ENCODE measurements at regions of chr20 and their contacts with region 1.

Region 1: DNA sequence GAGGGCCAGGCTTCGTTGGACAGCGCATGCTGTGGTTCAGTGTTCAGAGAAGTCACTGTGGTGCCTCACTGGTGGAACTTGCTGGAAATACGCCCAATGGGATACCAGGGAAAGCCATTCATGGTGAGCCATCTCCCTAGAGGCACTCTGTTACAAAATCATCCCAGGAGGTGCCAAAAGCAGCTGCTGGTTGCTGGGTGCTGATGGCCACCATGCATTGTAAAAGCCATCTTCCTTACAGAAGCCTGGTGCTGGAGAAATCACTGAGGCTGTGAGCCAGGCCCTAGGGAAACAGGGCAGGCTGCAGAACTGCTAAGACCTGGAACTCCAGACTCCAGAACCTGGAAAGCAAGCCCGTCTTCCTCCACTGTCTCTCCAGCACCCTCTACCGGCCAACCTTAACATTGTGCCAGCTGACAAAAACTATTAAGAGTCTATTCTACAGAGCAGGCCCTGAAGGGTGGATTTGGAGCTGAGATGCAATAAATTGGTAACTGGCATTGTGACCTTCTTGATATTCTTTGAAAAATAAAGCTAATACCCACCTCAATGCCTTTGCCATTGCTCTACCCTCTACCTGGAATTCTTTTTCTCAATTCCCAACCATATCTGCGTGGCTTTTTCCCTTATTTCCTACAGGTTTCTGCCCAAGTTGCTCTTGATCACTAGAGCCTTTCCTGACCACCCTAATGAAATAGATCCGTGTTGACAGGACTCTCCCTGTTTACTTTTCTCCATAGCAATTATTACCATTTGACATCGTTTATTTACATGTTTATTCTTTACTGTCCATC is 18.5 kb downstream of the SNRPB start:
- DNase-seq: peak; percentile 12 to 68 (median 39)
- ATAC-seq: peak; percentile 78
- H3K4me3 ChIP-seq: no peak overlapping the region
- H3K4me3 Mint-ChIP-seq: no peak overlapping the region
- H3K27ac ChIP-seq: no peak overlapping the region
- H3K27ac Mint-ChIP-seq: no peak overlapping the region
- H3K4me1 ChIP-seq: peaks cover 0 to 6% of the 10 kb centered on the region in 2 donors
- H3K4me1 Mint-ChIP-seq: peaks cover 0 to 13% (median 4%) of the 10 kb centered on the region in 7 donors
- H3K27me3 ChIP-seq: no peaks in the 10 kb centered on the region
- H3K27me3 Mint-ChIP-seq: peaks cover 0 to 4% (median 0%) of the 10 kb centered on the region in 5 donors

Region 2: GRCh38 chr20:1764136-1765033 is 687.8 kb before region 1 on chr20:
- CTCF ChIA-PET with region 1: no interaction called
- POLR2A ChIA-PET with region 1: no interaction called
- intact Hi-C with region 1: loop called in 1 of 2 experiments (anchors 2 kb)
- DNase-seq: peak in 8 of 9 donors; percentile 20 to 55 (median 44)
- ATAC-seq: peak; percentile 82
- H3K4me3 ChIP-seq: no peak overlapping the region
- H3K4me3 Mint-ChIP-seq: no peak overlapping the region
- H3K27ac ChIP-seq: no peak overlapping the region
- H3K27ac Mint-ChIP-seq: no peak overlapping the region
- H3K4me1 ChIP-seq: no peaks in the 10 kb centered on the region
- H3K4me1 Mint-ChIP-seq: peaks cover 0 to 5% (median 0%) of the 10 kb centered on the region in 7 donors
- H3K27me3 ChIP-seq: no peaks in the 10 kb centered on the region
- H3K27me3 Mint-ChIP-seq: peaks cover 0 to 27% (median 4%) of the 10 kb centered on the region in 5 donors

Region 3: DNA sequence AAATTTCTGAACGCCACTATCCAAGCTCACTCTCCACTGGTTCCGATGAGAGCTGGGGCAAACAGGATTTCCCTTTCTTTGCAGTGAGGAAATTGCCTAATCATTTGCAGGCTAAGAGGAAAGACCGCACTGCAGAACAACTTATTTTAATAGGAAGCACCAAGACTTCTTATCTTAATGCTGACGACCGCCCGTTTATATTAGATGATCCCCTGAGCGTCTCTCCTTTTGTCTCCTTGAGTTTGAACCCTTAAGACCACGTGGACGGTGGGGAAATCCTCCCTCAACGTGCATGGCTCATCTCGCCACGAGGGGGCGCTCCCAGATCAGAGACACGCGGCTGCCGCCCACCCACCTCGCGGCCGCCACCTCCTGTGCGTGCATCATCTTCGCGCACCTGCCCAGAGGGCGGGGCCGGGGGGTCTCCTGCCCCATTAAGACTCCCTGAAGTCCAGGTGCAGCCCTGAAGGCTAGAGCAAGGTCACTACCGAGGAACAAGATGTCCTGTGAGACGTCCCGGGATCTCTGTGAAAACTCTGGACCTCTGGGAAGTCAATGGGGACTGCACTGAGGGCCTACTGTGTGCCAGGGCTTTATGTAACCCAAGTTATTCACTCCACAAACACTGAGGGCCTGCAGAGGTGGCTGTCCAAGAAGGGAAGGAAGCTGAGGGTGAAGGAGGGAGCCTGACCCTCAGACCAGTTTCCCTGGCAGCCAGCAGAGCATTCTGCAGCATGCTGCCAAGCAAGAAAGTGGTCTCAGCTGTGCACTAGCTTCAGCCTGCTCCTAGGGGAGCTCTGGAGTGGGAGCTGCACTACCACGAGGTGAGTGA is 486.4 kb before region 1 on chr20:
- CTCF ChIA-PET with region 1: no interaction called
- POLR2A ChIA-PET with region 1: no interaction called
- intact Hi-C with region 1: loop called (anchors 5 kb)
- DNase-seq: peak; percentile 34 to 85 (median 62)
- ATAC-seq: peak; percentile 80
- H3K4me3 ChIP-seq: no peak overlapping the region
- H3K4me3 Mint-ChIP-seq: peak overlapping the region in 9 of 10 donors; percentile 33 to 72 (median 62)
- H3K27ac ChIP-seq: no peak overlapping the region
- H3K27ac Mint-ChIP-seq: no peak overlapping the region
- H3K4me1 ChIP-seq: no peaks in the 10 kb centered on the region
- H3K4me1 Mint-ChIP-seq: peaks cover 4 to 9% (median 7%) of the 10 kb centered on the region in 7 donors
- H3K27me3 ChIP-seq: no peaks in the 10 kb centered on the region
- H3K27me3 Mint-ChIP-seq: peaks cover 14 to 41% (median 28%) of the 10 kb centered on the region in 5 donors

Region 4: DNA sequence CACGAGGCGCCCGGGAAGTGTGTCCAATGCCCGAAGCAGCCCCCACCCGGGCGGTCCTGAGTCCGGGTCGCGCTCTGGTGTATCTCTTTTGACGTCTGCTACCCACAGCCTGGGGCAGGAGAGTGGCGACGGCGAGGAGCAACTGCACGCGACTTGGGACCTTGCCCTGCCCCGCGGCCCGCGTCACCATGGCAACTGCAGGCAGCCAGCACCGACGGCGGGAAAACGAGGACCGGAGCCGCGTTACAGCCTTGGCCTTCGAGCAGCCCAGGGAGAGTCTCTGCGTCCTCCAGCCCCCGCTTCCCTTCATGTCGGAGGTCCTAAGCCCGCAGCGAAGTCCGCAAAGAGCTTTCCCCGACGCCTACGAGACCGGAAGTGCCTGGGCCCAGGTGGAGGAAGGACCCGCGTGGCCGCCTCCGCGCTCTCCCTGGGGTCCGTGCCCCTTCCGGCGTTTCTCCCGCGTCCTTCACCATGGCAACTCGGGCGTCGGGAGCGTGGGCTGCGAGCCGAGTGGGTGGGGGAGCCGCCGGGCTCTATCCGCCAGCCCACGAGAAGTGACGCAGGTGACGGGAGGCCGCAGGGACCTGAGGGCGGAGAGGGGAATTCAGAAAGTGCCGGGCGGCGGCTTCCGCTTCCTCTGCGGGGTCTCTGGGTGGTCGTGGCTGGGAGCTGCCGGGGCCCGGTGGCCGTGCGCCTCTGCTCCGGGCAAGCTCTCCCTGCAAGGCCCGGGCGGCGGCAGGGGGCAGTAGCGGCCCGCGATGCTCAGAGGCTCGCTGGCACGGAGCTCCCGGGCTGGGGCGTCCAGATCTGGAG is 245.0 kb before region 1 on chr20:
- CTCF ChIA-PET with region 1: no interaction called
- POLR2A ChIA-PET with region 1: no interaction called
- intact Hi-C with region 1: loop called in 1 of 2 experiments (anchors 1 kb)
- DNase-seq: peak in 8 of 9 donors; percentile 17 to 84 (median 30)
- ATAC-seq: peak; percentile 75
- H3K4me3 ChIP-seq: peak overlapping the region; percentile 46
- H3K4me3 Mint-ChIP-seq: peak overlapping the region; percentile 64 to 86 (median 80)
- H3K27ac ChIP-seq: no peak overlapping the region
- H3K27ac Mint-ChIP-seq: peak overlapping the region in 1 of 9 donors; percentile 40
- H3K4me1 ChIP-seq: peaks cover 6 to 8% of the 10 kb centered on the region in 2 donors
- H3K4me1 Mint-ChIP-seq: peaks cover 0 to 5% (median 0%) of the 10 kb centered on the region in 7 donors
- H3K27me3 ChIP-seq: no peaks in the 10 kb centered on the region
- H3K27me3 Mint-ChIP-seq: peaks cover 10 to 39% (median 16%) of the 10 kb centered on the region in 5 donors

Region 5: DNA sequence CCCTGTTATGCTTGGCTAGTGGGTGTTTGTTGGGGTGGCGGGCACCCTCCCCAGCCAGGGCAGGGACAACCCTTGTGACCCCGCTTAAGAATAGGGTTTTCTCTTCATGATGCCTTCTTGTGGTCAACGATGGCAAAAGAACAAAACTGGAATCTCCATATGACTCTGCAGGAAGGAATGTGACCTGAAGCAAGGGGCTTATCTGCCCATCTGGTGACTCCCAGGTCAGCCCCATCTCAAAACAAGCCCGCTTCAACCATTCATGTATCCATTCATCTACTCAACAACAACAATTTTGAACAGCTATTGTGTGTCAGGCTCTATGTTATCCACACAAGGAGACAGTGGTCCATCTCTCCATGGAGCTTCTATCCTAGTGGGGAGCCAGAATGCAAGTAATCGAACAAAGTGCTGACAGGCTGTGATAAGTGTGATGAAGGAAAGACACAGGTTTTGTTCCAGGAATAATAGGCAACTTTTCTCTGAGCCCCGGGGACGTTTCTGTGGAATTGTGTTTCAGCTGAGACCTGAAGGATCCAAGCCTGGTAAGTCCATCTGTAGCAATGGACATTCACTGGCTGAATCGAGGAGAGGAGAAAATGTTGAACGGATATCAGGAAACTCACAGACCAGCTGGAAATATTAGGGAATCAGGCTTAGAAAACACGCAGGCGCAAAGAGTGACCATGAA is 102.2 kb before region 1 on chr20:
- CTCF ChIA-PET with region 1: no interaction called
- POLR2A ChIA-PET with region 1: no interaction called
- intact Hi-C with region 1: loop called in 1 of 2 experiments (anchors 1 kb)
- DNase-seq: no peak
- ATAC-seq: no peak
- H3K4me3 ChIP-seq: no peak overlapping the region
- H3K4me3 Mint-ChIP-seq: no peak overlapping the region
- H3K27ac ChIP-seq: no peak overlapping the region
- H3K27ac Mint-ChIP-seq: no peak overlapping the region
- H3K4me1 ChIP-seq: no peaks in the 10 kb centered on the region
- H3K4me1 Mint-ChIP-seq: peaks cover 0 to 6% (median 3%) of the 10 kb centered on the region in 7 donors
- H3K27me3 ChIP-seq: no peaks in the 10 kb centered on the region
- H3K27me3 Mint-ChIP-seq: peaks cover 25 to 36% (median 34%) of the 10 kb centered on the region in 5 donors

Region 6: GRCh38 chr20:2387180-2387577 is 65.0 kb before region 1 on chr20:
- CTCF ChIA-PET with region 1: no interaction called
- POLR2A ChIA-PET with region 1: no interaction called
- intact Hi-C with region 1: loop called in 1 of 2 experiments (anchors 2 kb)
- DNase-seq: peak in 6 of 9 donors; percentile 8 to 66 (median 18)
- ATAC-seq: peak; percentile 57
- H3K4me3 ChIP-seq: no peak overlapping the region
- H3K4me3 Mint-ChIP-seq: peak overlapping the region in 1 of 10 donors; percentile 76
- H3K27ac ChIP-seq: no peak overlapping the region
- H3K27ac Mint-ChIP-seq: peak overlapping the region in 1 of 9 donors; percentile 85
- H3K4me1 ChIP-seq: no peaks in the 10 kb centered on the region
- H3K4me1 Mint-ChIP-seq: peaks cover 0 to 17% (median 0%) of the 10 kb centered on the region in 7 donors
- H3K27me3 ChIP-seq: no peaks in the 10 kb centered on the region
- H3K27me3 Mint-ChIP-seq: peaks cover 0 to 48% (median 8%) of the 10 kb centered on the region in 5 donors

Region 7: GRCh38 chr20:2485661-2486060 is 33.5 kb after region 1 on chr20:
- CTCF ChIA-PET with region 1: no interaction called
- POLR2A ChIA-PET with region 1: no interaction called
- intact Hi-C with region 1: no loop called
- DNase-seq: no peak
- ATAC-seq: no peak
- H3K4me3 ChIP-seq: no peak overlapping the region
- H3K4me3 Mint-ChIP-seq: no peak overlapping the region
- H3K27ac ChIP-seq: no peak overlapping the region
- H3K27ac Mint-ChIP-seq: no peak overlapping the region
- H3K4me1 ChIP-seq: no peaks in the 10 kb centered on the region
- H3K4me1 Mint-ChIP-seq: peaks cover 0 to 6% (median 0%) of the 10 kb centered on the region in 7 donors
- H3K27me3 ChIP-seq: no peaks in the 10 kb centered on the region
- H3K27me3 Mint-ChIP-seq: no peaks in the 10 kb centered on the region